SK-N-SH (cell line): ENCODE measurements at regions of chr3 and their contacts with region 1.

Region 1: GRCh38 chr3:79086514-79086913 is 681.3 kb downstream of the ROBO1 start:
- DNase-seq: peak; percentile 34
- H3K4me3 ChIP-seq: no peak overlapping the region
- H3K27ac ChIP-seq: no peak overlapping the region
- H3K4me1 ChIP-seq: no peaks in the 10 kb centered on the region; a peak in 1 of 4 replicates
- H3K27me3 ChIP-seq: no peaks in the 10 kb centered on the region
- CTCF ChIP-seq: peak; percentile 89
- EP300 ChIP-seq: no peak
- RAD21 ChIP-seq: peak; percentile 72

Region 2: GRCh38 chr3:78887547-78888011 is 198.9 kb before region 1 on chr3:
- CTCF ChIA-PET with region 1: no interaction called
- POLR2A ChIA-PET with region 1: no interaction called
- DNase-seq: no peak
- H3K4me3 ChIP-seq: no peak overlapping the region
- H3K27ac ChIP-seq: no peak overlapping the region
- H3K4me1 ChIP-seq: peaks cover 0 to 12% of the 10 kb centered on the region in 2 experiments; a peak in 1 of 4 replicates
- H3K27me3 ChIP-seq: no peaks in the 10 kb centered on the region
- CTCF ChIP-seq: no peak
- EP300 ChIP-seq: no peak
- RAD21 ChIP-seq: no peak

Region 3: GRCh38 chr3:79103305-79103704 is 16.8 kb after region 1 on chr3:
- CTCF ChIA-PET with region 1: interaction called, 41 read pairs
- POLR2A ChIA-PET with region 1: no interaction called
- DNase-seq: no peak
- H3K4me3 ChIP-seq: no peak overlapping the region
- H3K27ac ChIP-seq: no peak overlapping the region
- H3K4me1 ChIP-seq: no peaks in the 10 kb centered on the region
- H3K27me3 ChIP-seq: no peaks in the 10 kb centered on the region
- CTCF ChIP-seq: no peak
- EP300 ChIP-seq: no peak
- RAD21 ChIP-seq: no peak

Region 4: GRCh38 chr3:79361748-79362378 is 275.3 kb after region 1 on chr3:
- CTCF ChIA-PET with region 1: interaction called, 90 read pairs
- POLR2A ChIA-PET with region 1: no interaction called
- DNase-seq: peak; percentile 36
- H3K4me3 ChIP-seq: 0 out of 4 replicates have a peak overlapping the region, but pooled peaks of 1 of the 2 experiments have one; percentile 20
- H3K27ac ChIP-seq: no peak overlapping the region
- H3K4me1 ChIP-seq: peaks cover 0 to 5% of the 10 kb centered on the region in 2 experiments; a peak in 2 of 4 replicates
- H3K27me3 ChIP-seq: no peaks in the 10 kb centered on the region
- CTCF ChIP-seq: peak; percentile 78
- EP300 ChIP-seq: no peak
- RAD21 ChIP-seq: peak; percentile 79

Region 5: GRCh38 chr3:79369306-79369705 is 282.8 kb after region 1 on chr3:
- CTCF ChIA-PET with region 1: interaction called, 90 read pairs
- POLR2A ChIA-PET with region 1: no interaction called
- DNase-seq: no peak
- H3K4me3 ChIP-seq: no peak overlapping the region
- H3K27ac ChIP-seq: no peak overlapping the region
- H3K4me1 ChIP-seq: peaks cover 0 to 11% of the 10 kb centered on the region in 2 experiments; a peak in 2 of 4 replicates
- H3K27me3 ChIP-seq: no peaks in the 10 kb centered on the region
- CTCF ChIP-seq: peak; percentile 52
- EP300 ChIP-seq: no peak
- RAD21 ChIP-seq: 0 out of 2 replicates have a peak, but pooled peaks have one; percentile 9

Region 6: DNA sequence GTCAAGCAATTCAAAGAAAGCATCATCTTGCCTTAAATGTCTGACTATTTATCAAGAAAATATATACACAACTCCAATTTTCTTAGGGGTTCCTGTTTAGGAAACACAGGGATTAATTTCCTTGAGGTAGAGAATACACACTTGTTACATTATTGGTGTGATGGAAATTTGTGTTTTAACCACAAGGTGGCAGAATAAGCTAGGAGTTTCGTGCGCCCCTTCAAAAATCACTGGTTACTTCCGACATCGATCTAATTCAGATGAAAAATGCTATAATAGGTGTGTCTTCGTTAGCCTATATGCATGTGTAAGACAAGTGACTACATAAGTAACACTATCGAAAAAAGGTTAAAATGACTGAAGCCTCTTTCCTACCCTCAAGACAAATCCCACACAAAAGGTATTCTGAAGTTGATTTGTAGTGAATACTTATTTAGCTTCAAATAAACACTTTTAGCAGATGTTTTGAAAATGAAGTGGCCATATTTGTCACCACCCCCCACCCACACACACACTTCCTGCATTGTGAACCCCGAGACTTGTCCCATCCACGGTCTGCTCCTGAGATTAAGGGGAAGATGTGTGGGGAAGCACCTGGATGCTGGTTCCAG is 434.8 kb after region 1 on chr3:
- CTCF ChIA-PET with region 1: interaction called, 17 read pairs
- POLR2A ChIA-PET with region 1: no interaction called
- DNase-seq: peak; percentile 21
- H3K4me3 ChIP-seq: no peak overlapping the region; a peak in 1 of 4 replicates
- H3K27ac ChIP-seq: no peak overlapping the region
- H3K4me1 ChIP-seq: peaks cover 0 to 3% of the 10 kb centered on the region in 2 experiments; a peak in 2 of 4 replicates
- H3K27me3 ChIP-seq: no peaks in the 10 kb centered on the region
- CTCF ChIP-seq: peak; percentile 75
- EP300 ChIP-seq: no peak
- RAD21 ChIP-seq: peak; percentile 92